Dendritic cell treated with granulocyte-macrophage colony-stimulating factor and Interleukin-4, amounts not matched to agents 40 ng/mL and 50 ng/mL, for 4 days (primary cell): ENCODE measurements at regions of chr22 and their contacts with region 1.

Region 1: GRCh38 chr22:41022470-41023298 is 69.7 kb upstream of the EP300 start:
- H3K4me3 Mint-ChIP-seq: peak overlapping the region; percentile 92
- H3K27ac Mint-ChIP-seq: peak overlapping the region; percentile 97
- H3K4me1 Mint-ChIP-seq: peaks cover 28% of the 10 kb centered on the region
- H3K27me3 Mint-ChIP-seq: no peaks in the 10 kb centered on the region

Region 2: GRCh38 chr22:40950962-40951794 is 71.5 kb before region 1 on chr22 and contains the start of gene RBX1:
- intact Hi-C with region 1: loop called (anchors 1 kb)
- H3K4me3 Mint-ChIP-seq: peak within 1 kb of the TSS; percentile 98
- H3K27ac Mint-ChIP-seq: peak within 1 kb of the TSS; percentile 89
- H3K4me1 Mint-ChIP-seq: peaks cover 22% of the 10 kb centered on the region
- H3K27me3 Mint-ChIP-seq: no peaks in the 10 kb centered on the region